ENCODE measurements at regions of chr1 and their contacts with region 1.

Region 1: DNA sequence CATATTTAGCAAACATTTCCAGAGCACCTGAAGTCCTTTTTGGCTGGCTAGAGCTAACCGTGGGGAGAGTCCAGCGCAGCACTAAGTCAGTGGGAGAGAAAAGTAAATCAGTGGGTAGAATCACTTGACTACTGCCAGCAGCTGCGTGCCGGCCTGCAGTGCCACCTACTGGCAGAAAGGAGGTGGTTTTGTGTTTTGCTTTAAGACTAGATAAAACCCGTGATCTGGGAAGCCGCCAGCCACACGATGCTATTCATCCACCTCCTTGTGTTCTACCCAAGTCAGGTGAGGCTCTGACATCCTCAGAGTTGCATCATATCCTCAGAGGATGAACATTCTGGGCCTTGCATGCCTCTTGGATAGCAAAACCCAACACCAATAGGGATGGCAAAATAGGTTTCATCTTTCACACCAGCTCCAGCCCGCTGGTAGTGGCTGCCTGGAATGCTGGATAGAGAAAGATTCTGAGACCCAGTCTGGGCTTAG is 14.1 kb upstream of the HEYL start:
- DNase-seq: peak; percentile 83
- H3K4me3 ChIP-seq: no peak overlapping the region
- H3K27ac ChIP-seq: no peak overlapping the region
- H3K4me1 ChIP-seq: no peaks in the 10 kb centered on the region
- H3K27me3 ChIP-seq: 0 out of 2 replicates have a peak, but pooled peaks cover 7% of the 10 kb centered on the region

Region 2: GRCh38 chr1:39282537-39283216 is 370.9 kb before region 1 on chr1:
- in situ Hi-C with region 1: no loop called
- DNase-seq: no peak
- H3K4me3 ChIP-seq: no peak overlapping the region
- H3K27ac ChIP-seq: no peak overlapping the region
- H3K4me1 ChIP-seq: no peaks in the 10 kb centered on the region
- H3K27me3 ChIP-seq: no peaks in the 10 kb centered on the region

Region 3: DNA sequence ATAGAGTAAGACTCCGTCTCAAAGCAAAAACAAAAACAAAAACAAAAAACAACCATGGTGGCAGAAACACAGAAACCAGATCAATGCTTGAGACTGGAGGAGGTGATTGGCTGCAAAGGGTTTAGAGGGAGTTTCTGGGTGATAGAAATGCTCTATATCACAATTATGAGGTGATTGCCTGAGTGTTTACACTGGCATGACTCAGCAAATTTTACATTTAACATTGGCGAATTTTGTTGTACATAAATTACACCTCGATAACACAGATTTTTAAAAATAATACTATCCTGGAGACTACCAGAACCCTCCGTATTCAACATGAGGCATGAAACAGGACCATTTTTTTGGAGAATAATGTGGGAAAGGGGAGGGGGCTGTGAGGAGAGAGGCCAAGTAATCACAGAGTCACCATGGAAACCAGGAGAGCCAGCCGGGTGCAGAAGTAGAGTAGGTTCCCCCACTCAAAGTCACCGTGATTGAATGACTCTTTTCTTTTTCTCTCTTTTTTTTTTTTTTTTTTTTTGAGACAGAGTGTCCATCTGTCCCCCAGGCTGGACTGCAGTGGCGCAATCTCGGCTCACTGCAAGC is 38.4 kb before region 1 on chr1:
- in situ Hi-C with region 1: loop called (anchors 5 kb)
- DNase-seq: no peak
- H3K4me3 ChIP-seq: no peak overlapping the region
- H3K27ac ChIP-seq: no peak overlapping the region
- H3K4me1 ChIP-seq: no peaks in the 10 kb centered on the region
- H3K27me3 ChIP-seq: no peaks in the 10 kb centered on the region; the same call in 1 of the 2 replicates

Measured in GM23248 (cell line).